H1 (cell line): ENCODE measurements at regions of chr3 and their contacts with region 1.

Region 1: GRCh38 chr3:64462203-64462602 is 225.6 kb downstream of the ADAMTS9 start:
- DNase-seq: no peak
- H3K4me3 ChIP-seq: no peak overlapping the region
- H3K27ac ChIP-seq: no peak overlapping the region
- H3K4me1 ChIP-seq: peaks cover 1 to 8% (median 2%) of the 10 kb centered on the region in 4 experiments; a peak in 3 of 7 replicates
- H3K27me3 ChIP-seq: no peaks in the 10 kb centered on the region
- CTCF ChIP-seq: no peak
- EP300 ChIP-seq: no peak
- POLR2A ChIP-seq: no peak
- RAD21 ChIP-seq: no peak

Region 2: GRCh38 chr3:64023187-64023848 is 438.9 kb before region 1 on chr3 and contains the start of gene PSMD6:
- CTCF ChIA-PET with region 1: interaction called, 14 read pairs
- POLR2A ChIA-PET with region 1: no interaction called
- DNase-seq: peak; percentile 57 to 99
- H3K4me3 ChIP-seq: peak within 1 kb of the TSS; percentile 93 to 97 (median 94)
- H3K27ac ChIP-seq: peak within 1 kb of the TSS; percentile 81
- H3K4me1 ChIP-seq: peaks cover 3 to 5% (median 4%) of the 10 kb centered on the region in 4 experiments; a peak in 6 of 7 replicates
- H3K27me3 ChIP-seq: no peaks in the 10 kb centered on the region
- CTCF ChIP-seq: peak; percentile 96 to 100 (median 100)
- EP300 ChIP-seq: peak in 1 of 2 experiments; percentile 48; a peak in 1 of 3 replicates
- POLR2A ChIP-seq: peak in 1 of 2 experiments; percentile 80; a peak in 2 of 3 replicates
- RAD21 ChIP-seq: peak; percentile 46 to 63
- total RNA-seq, gene PSMD6: 99.6 and 104 TPM in 2 replicates

Region 3: DNA sequence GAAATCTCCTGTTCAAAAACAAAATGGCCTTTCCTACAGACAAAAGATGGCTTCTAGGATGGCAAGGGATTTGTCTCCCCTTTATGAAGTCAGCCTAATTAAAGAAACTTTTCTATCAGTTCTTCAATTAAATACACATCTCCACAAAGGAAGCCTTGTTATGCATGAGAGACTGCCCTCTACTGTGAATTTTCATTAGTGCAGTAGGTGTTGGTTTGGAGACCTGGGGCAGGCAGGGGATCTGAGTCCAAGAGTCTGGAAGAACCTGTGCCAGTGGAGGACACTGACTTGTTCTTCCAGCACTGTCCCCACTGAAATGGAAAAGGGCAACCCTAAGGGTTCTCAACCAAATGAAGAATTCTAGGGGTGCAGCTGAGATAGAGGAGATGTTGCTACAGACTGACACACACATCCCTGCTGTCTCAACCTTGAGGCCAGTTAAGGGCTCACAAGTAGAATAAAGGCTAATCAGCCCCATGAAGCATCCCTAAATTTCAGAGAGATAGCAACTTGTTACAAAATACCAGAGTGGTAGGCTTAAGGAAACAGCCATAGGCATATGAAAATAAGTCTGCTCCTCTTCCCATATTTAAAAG is 62.9 kb before region 1 on chr3:
- CTCF ChIA-PET with region 1: interaction called, 16 read pairs
- POLR2A ChIA-PET with region 1: no interaction called
- DNase-seq: no peak
- H3K4me3 ChIP-seq: no peak overlapping the region
- H3K27ac ChIP-seq: no peak overlapping the region
- H3K4me1 ChIP-seq: peaks cover 0 to 7% (median 1%) of the 10 kb centered on the region in 4 experiments; a peak in 4 of 7 replicates
- H3K27me3 ChIP-seq: no peaks in the 10 kb centered on the region
- CTCF ChIP-seq: peak in 2 of 3 experiments; percentile 74 to 77; a peak in 3 of 4 replicates
- EP300 ChIP-seq: no peak
- POLR2A ChIP-seq: no peak
- RAD21 ChIP-seq: peak; percentile 83 to 86

Region 4: DNA sequence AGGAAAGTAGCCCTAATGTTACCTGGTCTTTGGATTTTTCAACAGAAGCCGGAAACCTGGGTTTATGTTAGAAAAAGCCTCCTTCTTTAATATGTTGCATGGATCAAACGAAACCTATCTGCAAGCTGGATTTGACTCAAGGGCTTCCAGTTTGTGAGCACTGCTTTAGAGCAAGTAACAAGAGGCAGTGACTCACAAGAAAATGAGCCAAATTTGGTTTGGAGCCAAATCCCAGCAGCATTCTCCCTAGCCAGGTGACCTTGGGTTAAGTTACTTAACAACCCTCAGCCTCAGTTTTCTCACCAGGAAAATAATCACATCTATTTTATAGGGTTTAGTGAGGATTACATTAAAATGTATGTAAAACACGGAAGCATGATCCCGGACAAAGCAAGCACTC is 21.7 kb before region 1 on chr3:
- CTCF ChIA-PET with region 1: interaction called, 63 read pairs
- POLR2A ChIA-PET with region 1: interaction called, 3 read pairs
- DNase-seq: no peak
- H3K4me3 ChIP-seq: no peak overlapping the region
- H3K27ac ChIP-seq: no peak overlapping the region
- H3K4me1 ChIP-seq: peaks cover 4 to 24% (median 17%) of the 10 kb centered on the region in 4 experiments
- H3K27me3 ChIP-seq: no peaks in the 10 kb centered on the region; a peak in 2 of 7 replicates
- CTCF ChIP-seq: no peak
- EP300 ChIP-seq: no peak
- POLR2A ChIP-seq: no peak
- RAD21 ChIP-seq: no peak

Region 5: DNA sequence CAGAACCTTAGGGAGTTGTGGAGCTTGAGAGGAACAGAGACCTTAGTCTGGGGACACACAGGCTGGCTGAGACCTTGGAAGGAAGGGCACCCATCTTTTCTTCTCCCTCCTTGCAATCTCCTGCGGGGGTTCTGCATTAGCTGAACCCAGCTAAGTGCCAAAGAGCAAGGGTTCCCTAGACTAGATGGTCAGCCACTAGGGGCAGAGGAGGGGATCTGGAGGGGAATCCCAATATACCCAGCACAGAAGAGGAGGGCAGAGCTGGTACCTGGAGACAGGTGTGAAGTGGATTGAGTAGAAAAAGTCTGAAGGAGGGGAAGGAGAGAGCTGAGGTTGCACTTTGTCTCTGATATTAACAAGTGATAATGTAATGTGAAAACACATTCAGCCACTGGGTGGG is 12.8 kb after region 1 on chr3:
- CTCF ChIA-PET with region 1: interaction called, 45 read pairs
- POLR2A ChIA-PET with region 1: no interaction called
- DNase-seq: no peak
- H3K4me3 ChIP-seq: no peak overlapping the region
- H3K27ac ChIP-seq: no peak overlapping the region
- H3K4me1 ChIP-seq: no peaks in the 10 kb centered on the region
- H3K27me3 ChIP-seq: no peaks in the 10 kb centered on the region
- CTCF ChIP-seq: peak in 2 of 3 experiments; percentile 15 to 28; a peak in 2 of 4 replicates
- EP300 ChIP-seq: no peak
- POLR2A ChIP-seq: no peak
- RAD21 ChIP-seq: no peak; a peak in 1 of 4 replicates